Left cardiac atrium (tissue), 4 donors: ENCODE measurements at regions of chr2 and their contacts with region 1.

Region 1: GRCh38 chr2:197310271-197310985 is at the start of gene ANKRD44:
- DNase-seq: peak; percentile 95
- ATAC-seq: peak; percentile 97 to 98
- total RNA-seq, gene ANKRD44: 10.2 to 16.8 TPM

Region 2: GRCh38 chr2:197184959-197185586 is 125.4 kb before region 1 on chr2:
- intact Hi-C with region 1: loop called in 1 of 2 experiments (anchors 5 kb)
- DNase-seq: peak; percentile 83
- ATAC-seq: peak; percentile 92 to 93

Region 3: GRCh38 chr2:197191177-197191939 is 119.1 kb before region 1 on chr2:
- intact Hi-C with region 1: loop called (anchors 1 to 5 kb)
- DNase-seq: no peak
- ATAC-seq: peak in 1 of 2 donors; percentile 37